ENCODE measurements at regions of chr14 and their contacts with region 1.

Region 1: DNA sequence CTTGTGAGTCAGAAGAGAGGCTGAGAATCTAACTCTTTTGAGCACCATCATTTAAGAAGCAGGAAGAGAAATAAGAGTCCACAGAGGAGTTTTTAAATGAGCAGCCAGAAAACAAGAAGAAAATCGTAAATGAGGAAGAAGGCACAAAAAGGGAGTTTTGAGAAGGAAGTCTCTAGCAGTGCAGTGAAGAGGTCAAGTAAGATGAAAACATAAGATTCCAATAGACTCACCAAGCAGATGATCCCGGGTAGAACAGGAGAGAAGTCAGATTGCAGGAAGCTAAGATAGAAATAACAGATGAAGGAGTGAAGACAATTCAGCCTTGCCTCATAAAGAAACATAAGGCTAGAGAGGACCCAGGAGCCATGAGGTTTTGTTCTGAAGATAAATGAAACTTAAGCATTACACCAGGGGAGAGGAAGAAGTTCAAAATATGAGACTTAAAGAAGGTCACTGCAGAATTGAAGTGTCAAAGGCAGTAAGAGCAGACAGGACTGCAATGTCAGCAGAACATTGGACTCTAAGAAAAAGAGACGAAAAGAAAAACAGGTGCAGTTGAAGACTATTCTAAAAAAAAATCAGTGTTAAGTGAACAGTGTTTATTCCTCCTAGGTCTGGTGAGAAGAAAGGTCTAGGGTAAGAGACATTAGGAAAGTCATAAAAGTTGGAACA is 229.0 kb downstream of the SEC23A start:
- DNase-seq: no peak

Region 2: GRCh38 chr14:37903343-37904191 is 970.5 kb before region 1 on chr14:
- intact Hi-C with region 1: loop called (anchors 10 kb)
- DNase-seq: no peak

Region 3: GRCh38 chr14:38989922-38990546 is 116.0 kb after region 1 on chr14:
- intact Hi-C with region 1: loop called (anchors 5 kb)
- DNase-seq: no peak

Region 4: GRCh38 chr14:39014460-39014859 is 140.4 kb after region 1 on chr14:
- intact Hi-C with region 1: loop called (anchors 5 kb)
- DNase-seq: no peak

Region 5: DNA sequence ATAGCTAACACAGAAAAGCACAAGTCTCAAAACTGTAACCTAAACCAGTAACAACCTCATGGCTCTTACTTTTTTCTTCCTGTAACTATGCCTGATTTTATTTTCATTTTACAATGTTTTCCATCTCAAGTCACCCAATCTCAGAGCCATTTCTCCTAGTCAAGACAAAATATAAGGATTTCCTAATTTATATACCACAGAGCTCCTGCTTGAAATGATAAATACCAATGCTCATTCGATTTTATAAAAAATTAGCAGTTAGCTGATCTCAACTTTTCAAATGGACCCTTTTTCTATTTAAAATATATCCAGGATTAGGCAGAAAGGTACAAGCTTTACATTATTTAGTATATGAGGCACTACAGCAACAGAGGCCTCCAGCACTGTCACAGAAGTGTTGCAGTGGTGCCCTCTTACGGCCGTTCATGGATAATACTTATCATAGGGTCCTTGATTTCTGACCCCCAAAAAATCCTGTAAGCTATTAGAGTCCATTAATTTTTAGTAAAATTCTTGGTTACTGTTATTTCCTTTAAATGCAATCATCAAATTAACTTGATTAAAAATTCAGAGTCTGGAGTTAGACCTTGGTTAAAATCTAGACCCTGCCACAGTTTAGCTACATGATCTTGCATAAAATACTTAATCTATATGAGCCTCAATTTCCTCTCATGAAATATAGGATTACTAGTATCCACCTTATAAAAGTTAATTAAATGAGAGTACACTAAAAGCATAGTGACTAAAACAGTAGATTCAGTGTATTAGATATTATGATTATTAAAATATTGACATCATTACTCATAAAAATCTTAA is 160.6 kb after region 1 on chr14:
- intact Hi-C with region 1: no loop called
- DNase-seq: no peak

Measured in cardiac septum (tissue), 1 donor.